Breast epithelium (tissue), 4 donors: ENCODE measurements at regions of chr7 and their contacts with region 1.

Region 1: GRCh38 chr7:134432296-134433152 is 26.4 kb downstream of the AKR1B1 start:
- DNase-seq: peak; percentile 68 to 77
- H3K4me3 ChIP-seq: peak overlapping the region; percentile 20 to 59 (median 44)
- H3K27ac ChIP-seq: peak overlapping the region; percentile 63 to 87
- H3K4me1 ChIP-seq: no peaks in the 10 kb centered on the region
- H3K27me3 ChIP-seq: no peaks in the 10 kb centered on the region
- CTCF ChIP-seq: peak; percentile 68 to 95 (median 88)
- POLR2A ChIP-seq: no peak

Region 2: DNA sequence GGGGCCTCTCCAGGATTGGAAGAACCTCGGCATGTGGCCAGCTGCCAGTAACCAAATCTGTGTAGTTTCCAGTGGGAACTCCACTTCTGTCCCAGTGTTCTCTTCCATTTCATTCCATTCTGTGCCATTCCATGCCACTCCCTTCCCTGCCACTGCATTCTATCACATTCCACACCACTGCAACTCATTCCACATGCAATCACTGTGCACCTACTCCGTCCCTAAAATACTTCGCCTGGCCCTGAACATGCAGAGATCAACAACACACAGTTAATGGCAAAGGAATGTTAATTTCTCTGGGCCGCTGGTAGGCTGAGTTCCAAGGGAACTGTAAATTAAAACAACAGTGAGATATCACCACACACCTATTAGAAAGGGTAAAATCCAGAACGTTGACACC is 38.5 kb before region 1 on chr7:
- intact Hi-C with region 1: no loop called
- DNase-seq: no peak
- H3K4me3 ChIP-seq: no peak overlapping the region
- H3K27ac ChIP-seq: no peak overlapping the region
- H3K4me1 ChIP-seq: no peaks in the 10 kb centered on the region
- H3K27me3 ChIP-seq: no peaks in the 10 kb centered on the region
- CTCF ChIP-seq: no peak
- POLR2A ChIP-seq: no peak

Region 3: GRCh38 chr7:134454277-134454676 is 21.8 kb after region 1 on chr7:
- intact Hi-C with region 1: loop called (anchors 1 kb)
- DNase-seq: no peak
- H3K4me3 ChIP-seq: no peak overlapping the region
- H3K27ac ChIP-seq: peak overlapping the region; percentile 5 to 58
- H3K4me1 ChIP-seq: no peaks in the 10 kb centered on the region
- H3K27me3 ChIP-seq: no peaks in the 10 kb centered on the region
- CTCF ChIP-seq: no peak
- POLR2A ChIP-seq: no peak

Region 4: GRCh38 chr7:134514663-134515062 is 82.1 kb after region 1 on chr7:
- intact Hi-C with region 1: loop called (anchors 10 kb)
- DNase-seq: no peak
- H3K4me3 ChIP-seq: no peak overlapping the region
- H3K27ac ChIP-seq: no peak overlapping the region
- H3K4me1 ChIP-seq: no peaks in the 10 kb centered on the region
- H3K27me3 ChIP-seq: no peaks in the 10 kb centered on the region
- CTCF ChIP-seq: peak; percentile 85 to 94 (median 89)
- POLR2A ChIP-seq: no peak

Region 5: GRCh38 chr7:135886345-135887132 is 1454.0 kb after region 1 on chr7:
- intact Hi-C with region 1: no loop called
- DNase-seq: no peak
- H3K4me3 ChIP-seq: no peak overlapping the region
- H3K27ac ChIP-seq: no peak overlapping the region
- H3K4me1 ChIP-seq: no peaks in the 10 kb centered on the region
- H3K27me3 ChIP-seq: no peaks in the 10 kb centered on the region
- CTCF ChIP-seq: no peak
- POLR2A ChIP-seq: no peak